ENCODE measurements at regions of chr6 and their contacts with region 1.

Region 1: DNA sequence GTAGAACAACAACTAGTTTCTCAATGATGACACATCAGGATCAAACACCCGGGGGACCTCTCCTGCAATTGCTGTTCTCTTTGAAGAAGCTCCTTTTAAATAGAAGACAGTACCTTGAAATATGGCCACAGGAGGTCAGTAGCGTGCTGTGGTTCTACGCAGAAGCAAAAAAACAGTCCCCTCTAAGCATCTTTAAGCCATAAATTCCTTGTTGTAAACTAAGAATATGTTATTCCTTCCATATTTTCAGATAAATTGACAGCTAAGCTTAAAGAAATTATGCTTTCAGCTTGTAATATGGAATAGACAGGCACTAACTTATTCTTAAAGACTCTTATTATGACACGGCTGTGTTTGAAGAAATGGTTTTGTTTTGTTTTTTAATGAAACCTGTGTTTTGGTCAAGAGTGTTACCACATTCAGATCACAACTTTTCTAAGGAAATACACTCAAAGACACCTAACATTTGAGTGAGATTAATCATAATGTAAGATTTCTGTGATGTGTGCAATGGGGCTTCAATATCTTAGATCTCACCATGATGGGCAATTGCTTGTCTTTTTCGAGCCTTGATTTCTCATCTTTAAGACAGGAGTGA is 49.7 kb upstream of the IL20RA start:
- DNase-seq: no peak
- ATAC-seq: peak; percentile 87
- H3K4me3 ChIP-seq: no peak overlapping the region
- H3K27ac ChIP-seq: no peak overlapping the region
- H3K4me1 ChIP-seq: peaks cover 4% of the 10 kb centered on the region
- H3K27me3 ChIP-seq: no peaks in the 10 kb centered on the region
- CTCF ChIP-seq: peak; percentile 78

Region 2: GRCh38 chr6:136439514-136440190 is 654.9 kb before region 1 on chr6:
- intact Hi-C with region 1: no loop called
- DNase-seq: no peak
- ATAC-seq: peak; percentile 64
- H3K4me3 ChIP-seq: no peak overlapping the region
- H3K27ac ChIP-seq: peak overlapping the region; percentile 15
- H3K4me1 ChIP-seq: no peaks in the 10 kb centered on the region
- H3K27me3 ChIP-seq: no peaks in the 10 kb centered on the region
- CTCF ChIP-seq: no peak

Region 3: GRCh38 chr6:136967876-136968752 is 126.4 kb before region 1 on chr6:
- intact Hi-C with region 1: no loop called
- DNase-seq: peak; percentile 73
- ATAC-seq: peak; percentile 95
- H3K4me3 ChIP-seq: no peak overlapping the region
- H3K27ac ChIP-seq: no peak overlapping the region
- H3K4me1 ChIP-seq: no peaks in the 10 kb centered on the region
- H3K27me3 ChIP-seq: no peaks in the 10 kb centered on the region
- CTCF ChIP-seq: peak; percentile 66

Region 4: GRCh38 chr6:137313928-137314855 is 219.7 kb after region 1 on chr6:
- intact Hi-C with region 1: loop called (anchors 10 kb)
- DNase-seq: peak; percentile 80
- ATAC-seq: peak; percentile 93
- H3K4me3 ChIP-seq: peak overlapping the region; percentile 7
- H3K27ac ChIP-seq: no peak overlapping the region
- H3K4me1 ChIP-seq: peaks cover 19% of the 10 kb centered on the region
- H3K27me3 ChIP-seq: no peaks in the 10 kb centered on the region
- CTCF ChIP-seq: peak; percentile 81